Heart left ventricle (tissue), 16 donors: ENCODE measurements at regions of chr6 and their contacts with region 1.

Region 1: GRCh38 chr6:14216946-14217684 is 99.5 kb downstream of the CD83 start:
- DNase-seq: no peak
- ATAC-seq: no peak
- H3K4me3 ChIP-seq: no peak overlapping the region
- H3K27ac ChIP-seq: no peak overlapping the region
- H3K4me1 ChIP-seq: peaks cover 0 to 2% (median 1%) of the 10 kb centered on the region in 12 donors
- H3K27me3 ChIP-seq: no peaks in the 10 kb centered on the region
- CTCF ChIP-seq: no peak
- POLR2A ChIP-seq: no peak

Region 2: GRCh38 chr6:14533446-14533845 is 316.3 kb after region 1 on chr6:
- intact Hi-C with region 1: loop called in 1 of 10 experiments (anchors 5 kb)
- DNase-seq: no peak
- ATAC-seq: no peak
- H3K4me3 ChIP-seq: no peak overlapping the region
- H3K27ac ChIP-seq: no peak overlapping the region
- H3K4me1 ChIP-seq: peaks cover 0 to 8% (median 0%) of the 10 kb centered on the region in 12 donors
- H3K27me3 ChIP-seq: no peaks in the 10 kb centered on the region
- CTCF ChIP-seq: no peak
- POLR2A ChIP-seq: no peak